Caco-2 (cell line): ENCODE measurements at regions of chr4 and their contacts with region 1.

Region 1: DNA sequence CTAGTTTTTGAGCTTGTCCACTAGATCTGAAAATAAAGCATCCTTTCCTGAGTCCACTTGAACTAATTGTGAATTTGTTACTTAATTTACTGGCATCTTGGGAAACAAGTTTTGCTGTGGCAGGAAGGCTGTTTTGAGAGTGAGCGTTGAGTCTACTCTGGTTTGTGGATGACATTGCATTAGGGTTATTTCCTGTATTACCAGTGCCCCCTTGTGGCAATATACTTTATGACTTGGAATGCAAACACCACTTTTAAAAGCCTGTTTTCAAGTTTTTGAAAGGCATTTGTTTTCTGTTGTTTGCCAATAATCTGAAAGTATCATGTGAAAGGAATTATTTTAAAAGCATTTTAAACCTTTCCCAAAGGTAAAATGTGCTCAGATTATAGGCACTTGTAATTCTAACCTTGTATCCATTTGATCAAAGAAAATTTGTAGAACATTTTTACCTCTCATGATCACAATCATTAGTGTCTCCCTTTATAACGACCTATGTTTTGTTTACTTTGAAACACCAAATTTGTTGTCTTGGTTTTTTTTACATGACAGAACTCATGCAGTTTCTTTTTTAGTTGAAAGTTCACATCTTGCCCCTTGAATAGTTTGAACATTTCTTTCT is 18.0 kb upstream of the CYP2U1 start:
- DNase-seq: peak; percentile 39 to 71
- H3K4me3 ChIP-seq: no peak overlapping the region
- H3K4me3 Mint-ChIP-seq: no peak overlapping the region
- H3K27ac Mint-ChIP-seq: no peak overlapping the region
- H3K4me1 ChIP-seq: peaks cover 11% of the 10 kb centered on the region
- H3K4me1 Mint-ChIP-seq: peaks cover 6% of the 10 kb centered on the region
- H3K27me3 ChIP-seq: no peaks in the 10 kb centered on the region
- H3K27me3 Mint-ChIP-seq: no peaks in the 10 kb centered on the region
- CTCF ChIP-seq: peak; percentile 56 to 70

Region 2: DNA sequence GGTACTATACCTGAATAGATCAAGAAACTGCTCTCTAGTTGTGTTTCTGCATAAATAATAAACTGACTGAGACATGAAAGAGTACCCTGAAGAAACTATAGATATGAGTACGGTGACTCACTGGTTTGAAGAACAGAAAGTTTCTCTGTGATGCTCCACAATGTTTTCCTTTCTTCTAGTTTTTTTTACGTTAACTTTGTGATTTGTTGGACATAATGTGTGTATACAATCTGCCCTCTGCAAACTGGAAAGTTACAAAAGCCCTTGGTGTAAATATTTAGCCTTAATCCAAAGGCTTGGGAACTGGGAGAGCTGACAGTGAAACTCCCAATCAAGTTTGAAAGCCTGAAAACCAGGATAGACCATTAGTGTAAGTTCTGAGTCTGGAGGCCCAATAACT is 161.7 kb before region 1 on chr4:
- CTCF ChIA-PET with region 1: no interaction called
- POLR2A ChIA-PET with region 1: no interaction called
- intact Hi-C with region 1: no loop called
- DNase-seq: no peak
- H3K4me3 ChIP-seq: no peak overlapping the region
- H3K4me3 Mint-ChIP-seq: no peak overlapping the region
- H3K27ac Mint-ChIP-seq: no peak overlapping the region
- H3K4me1 ChIP-seq: no peaks in the 10 kb centered on the region
- H3K4me1 Mint-ChIP-seq: no peaks in the 10 kb centered on the region
- H3K27me3 ChIP-seq: no peaks in the 10 kb centered on the region; the same call in 1 of the 2 replicates
- H3K27me3 Mint-ChIP-seq: peaks cover 14% of the 10 kb centered on the region
- CTCF ChIP-seq: no peak

Region 3: GRCh38 chr4:107824353-107825071 is 88.9 kb before region 1 on chr4 and contains the start of gene SGMS2:
- CTCF ChIA-PET with region 1: no interaction called
- POLR2A ChIA-PET with region 1: no interaction called
- intact Hi-C with region 1: loop called (anchors 10 kb)
- DNase-seq: peak; percentile 74 to 78
- H3K4me3 ChIP-seq: peak within 1 kb of the TSS; percentile 53
- H3K4me3 Mint-ChIP-seq: peak within 1 kb of the TSS; percentile 96
- H3K27ac Mint-ChIP-seq: peak within 1 kb of the TSS; percentile 93
- H3K4me1 ChIP-seq: no peaks in the 10 kb centered on the region; the same call in 1 of the 2 replicates
- H3K4me1 Mint-ChIP-seq: peaks cover 13% of the 10 kb centered on the region
- H3K27me3 ChIP-seq: no peaks in the 10 kb centered on the region
- H3K27me3 Mint-ChIP-seq: peaks cover 3% of the 10 kb centered on the region
- CTCF ChIP-seq: no peak
- total RNA-seq, gene SGMS2: 3.4 and 5.6 TPM in 2 replicates

Region 4: DNA sequence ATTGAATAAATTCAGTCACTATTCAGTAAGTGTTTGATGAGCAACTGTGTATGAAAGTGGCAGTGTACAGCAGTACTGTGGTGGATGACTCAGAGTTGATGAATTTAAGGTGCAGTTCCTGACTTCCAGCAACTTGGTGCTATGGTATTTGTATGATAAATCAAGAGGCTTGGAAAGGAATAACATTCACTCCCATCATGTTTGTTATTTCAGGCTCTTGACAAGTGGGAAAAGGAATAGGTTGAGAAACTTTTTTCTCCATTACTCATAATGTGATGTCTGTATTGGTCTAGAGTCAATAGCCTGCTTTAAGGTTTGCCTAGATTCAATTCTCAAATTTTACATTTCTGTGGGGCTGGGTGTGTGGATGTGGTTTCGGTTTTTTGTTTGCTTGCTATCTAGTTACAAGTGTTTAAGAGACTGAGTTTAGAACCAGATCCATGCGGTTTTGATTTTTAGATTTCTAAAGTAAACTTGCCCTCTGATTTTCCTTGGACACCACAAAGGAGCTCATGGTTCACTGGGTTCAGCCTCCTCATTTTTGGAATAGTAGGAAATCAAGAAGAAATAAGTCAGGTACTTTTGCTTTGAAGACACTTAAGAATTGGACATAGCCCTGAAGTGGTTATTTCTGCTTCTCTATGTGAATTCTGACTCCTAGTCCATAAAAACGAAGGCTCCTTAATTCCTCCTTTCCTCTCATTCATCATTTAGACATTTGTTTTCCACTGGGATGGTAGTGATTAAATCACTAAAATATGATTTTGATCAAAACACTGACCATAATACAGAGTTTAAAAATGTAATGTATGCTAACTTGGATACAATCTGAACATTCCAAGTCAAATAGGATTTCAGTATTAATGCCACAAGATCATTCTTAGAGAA is 17.0 kb before region 1 on chr4:
- CTCF ChIA-PET with region 1: no interaction called
- POLR2A ChIA-PET with region 1: no interaction called
- intact Hi-C with region 1: no loop called
- DNase-seq: no peak
- H3K4me3 ChIP-seq: no peak overlapping the region
- H3K4me3 Mint-ChIP-seq: no peak overlapping the region
- H3K27ac Mint-ChIP-seq: no peak overlapping the region
- H3K4me1 ChIP-seq: peaks cover 5% of the 10 kb centered on the region; the same call in 1 of the 2 replicates
- H3K4me1 Mint-ChIP-seq: no peaks in the 10 kb centered on the region
- H3K27me3 ChIP-seq: no peaks in the 10 kb centered on the region
- H3K27me3 Mint-ChIP-seq: no peaks in the 10 kb centered on the region
- CTCF ChIP-seq: no peak

Region 5: GRCh38 chr4:107930821-107931774 is 17.7 kb after region 1 on chr4 and contains the start of gene CYP2U1:
- CTCF ChIA-PET with region 1: no interaction called
- POLR2A ChIA-PET with region 1: no interaction called
- intact Hi-C with region 1: no loop called
- DNase-seq: peak; percentile 81 to 86
- H3K4me3 ChIP-seq: peak within 1 kb of the TSS; percentile 52
- H3K4me3 Mint-ChIP-seq: peak within 1 kb of the TSS; percentile 85
- H3K27ac Mint-ChIP-seq: no peak within 1 kb of the TSS
- H3K4me1 ChIP-seq: 0 out of 2 replicates have a peak, but pooled peaks cover 3% of the 10 kb centered on the region
- H3K4me1 Mint-ChIP-seq: peaks cover 14% of the 10 kb centered on the region
- H3K27me3 ChIP-seq: no peaks in the 10 kb centered on the region
- H3K27me3 Mint-ChIP-seq: peaks cover 8% of the 10 kb centered on the region
- CTCF ChIP-seq: no peak
- total RNA-seq, gene CYP2U1: 1.4 and 1.7 TPM in 2 replicates